ENCODE measurements at regions of chr1 and their contacts with region 1.

Region 1: DNA sequence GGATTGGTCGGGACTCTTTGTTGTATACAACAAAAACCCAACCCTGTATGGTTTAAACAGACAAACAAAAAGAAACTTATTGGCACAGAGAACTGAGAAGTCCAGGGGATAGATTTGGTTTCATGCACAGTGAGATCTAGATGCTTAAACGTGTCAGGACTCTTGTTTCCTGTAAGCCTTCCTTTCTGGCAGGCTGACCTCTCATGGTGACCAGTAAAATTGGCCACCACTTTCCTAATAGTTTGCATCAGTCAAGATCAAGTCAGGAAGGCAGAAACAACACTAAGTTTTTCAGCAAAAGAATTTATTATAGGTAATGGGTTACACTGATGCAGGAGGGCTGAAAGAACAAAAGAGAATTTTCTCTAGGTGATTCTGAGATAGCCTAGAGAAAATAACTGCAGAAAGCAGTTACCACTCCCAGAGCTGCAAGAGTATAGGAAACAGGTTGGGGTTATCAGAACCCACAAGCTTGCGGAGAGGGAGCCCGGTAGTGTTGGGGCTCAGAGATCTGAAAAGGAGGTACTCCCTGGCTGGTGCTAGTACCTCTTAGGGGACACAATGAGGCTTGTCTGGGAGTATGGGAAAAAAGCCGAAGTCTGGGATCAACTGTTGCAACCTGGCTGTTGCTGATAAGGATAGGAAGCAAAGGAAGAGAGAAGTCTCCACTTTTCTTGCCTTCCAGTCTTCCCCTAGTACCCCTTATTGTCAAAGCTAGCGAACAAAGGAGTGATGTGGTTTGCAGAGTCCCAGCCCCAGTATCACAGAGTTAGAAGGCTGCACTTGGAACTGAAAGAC is 21.4 kb downstream of the CITED4 start:
- DNase-seq: no peak
- H3K4me3 ChIP-seq: no peak overlapping the region
- H3K27ac ChIP-seq: no peak overlapping the region
- H3K4me1 ChIP-seq: peaks cover 0 to 4% (median 0%) of the 10 kb centered on the region in 3 donors
- H3K27me3 ChIP-seq: peaks cover 0 to 4% (median 0%) of the 10 kb centered on the region in 4 donors
- CTCF ChIP-seq: no peak
- POLR2A ChIP-seq: no peak

Region 2: GRCh38 chr1:41245659-41246058 is 404.9 kb after region 1 on chr1:
- intact Hi-C with region 1: loop called (anchors 5 kb)
- DNase-seq: no peak
- H3K4me3 ChIP-seq: no peak overlapping the region
- H3K27ac ChIP-seq: no peak overlapping the region
- H3K4me1 ChIP-seq: peaks cover 0 to 17% (median 7%) of the 10 kb centered on the region in 3 donors
- H3K27me3 ChIP-seq: no peaks in the 10 kb centered on the region
- CTCF ChIP-seq: no peak
- POLR2A ChIP-seq: no peak

Measured in esophagus squamous epithelium (tissue), 5 donors.